Endothelial cell of umbilical vein (primary cell): ENCODE measurements at regions of chr15 and their contacts with region 1.

Region 1: GRCh38 chr15:99704444-99704838 is 28.8 kb downstream of the LYSMD4 start:
- DNase-seq: peak; percentile 92
- H3K4me3 ChIP-seq: no peak overlapping the region
- H3K27ac ChIP-seq: peak overlapping the region; percentile 75
- H3K4me1 ChIP-seq: peaks cover 46% of the 10 kb centered on the region
- H3K27me3 ChIP-seq: no peaks in the 10 kb centered on the region
- CTCF ChIP-seq: peak; percentile 50 to 61
- POLR2A ChIP-seq: no peak

Region 2: DNA sequence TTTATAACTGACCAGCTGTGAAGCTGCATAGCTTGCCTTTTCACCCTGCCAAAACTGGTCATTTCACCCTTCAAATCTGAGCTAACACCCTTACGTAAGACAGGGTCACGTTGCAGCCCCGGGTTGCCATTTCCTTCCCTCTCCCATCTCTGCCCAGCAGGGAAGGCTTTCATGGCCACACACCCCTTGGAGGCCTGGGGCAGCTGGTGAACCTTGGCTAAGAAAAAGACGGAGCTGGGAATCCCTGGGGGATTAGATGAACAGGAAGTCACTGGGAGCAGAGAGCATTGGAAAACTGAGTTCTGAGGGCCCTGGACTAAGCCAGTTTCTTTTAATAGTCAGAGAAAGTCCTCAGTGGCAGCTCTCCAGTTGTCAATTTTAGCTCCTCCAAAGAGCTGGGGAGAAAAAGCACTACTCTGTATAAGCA is 522.9 kb before region 1 on chr15:
- CTCF ChIA-PET with region 1: no interaction called
- POLR2A ChIA-PET with region 1: no interaction called
- dilution Hi-C with region 1: no loop called
- intact Hi-C with region 1: no loop called
- DNase-seq: no peak
- H3K4me3 ChIP-seq: no peak overlapping the region
- H3K27ac ChIP-seq: no peak overlapping the region
- H3K4me1 ChIP-seq: peaks cover 7% of the 10 kb centered on the region
- H3K27me3 ChIP-seq: no peaks in the 10 kb centered on the region
- CTCF ChIP-seq: no peak
- POLR2A ChIP-seq: no peak

Region 3: GRCh38 chr15:99264125-99264524 is 440.3 kb before region 1 on chr15:
- CTCF ChIA-PET with region 1: interaction called, 230 read pairs
- POLR2A ChIA-PET with region 1: no interaction called
- dilution Hi-C with region 1: no loop called
- intact Hi-C with region 1: no loop called
- DNase-seq: no peak
- H3K4me3 ChIP-seq: no peak overlapping the region
- H3K27ac ChIP-seq: no peak overlapping the region
- H3K4me1 ChIP-seq: no peaks in the 10 kb centered on the region
- H3K27me3 ChIP-seq: no peaks in the 10 kb centered on the region
- CTCF ChIP-seq: no peak
- POLR2A ChIP-seq: no peak

Region 4: GRCh38 chr15:99343881-99344551 is 360.4 kb before region 1 on chr15:
- CTCF ChIA-PET with region 1: interaction called, 103 read pairs
- POLR2A ChIA-PET with region 1: no interaction called
- dilution Hi-C with region 1: no loop called
- intact Hi-C with region 1: loop called (anchors 1 kb)
- DNase-seq: peak; percentile 75
- H3K4me3 ChIP-seq: no peak overlapping the region
- H3K27ac ChIP-seq: peak overlapping the region; percentile 13
- H3K4me1 ChIP-seq: peaks cover 14% of the 10 kb centered on the region
- H3K27me3 ChIP-seq: no peaks in the 10 kb centered on the region
- CTCF ChIP-seq: peak; percentile 68 to 70
- POLR2A ChIP-seq: no peak

Region 5: GRCh38 chr15:99414755-99415731 is 289.4 kb before region 1 on chr15:
- CTCF ChIA-PET with region 1: interaction called, 121 read pairs
- POLR2A ChIA-PET with region 1: no interaction called
- dilution Hi-C with region 1: no loop called
- intact Hi-C with region 1: no loop called
- DNase-seq: no peak
- H3K4me3 ChIP-seq: no peak overlapping the region
- H3K27ac ChIP-seq: no peak overlapping the region
- H3K4me1 ChIP-seq: no peaks in the 10 kb centered on the region
- H3K27me3 ChIP-seq: no peaks in the 10 kb centered on the region
- CTCF ChIP-seq: no peak
- POLR2A ChIP-seq: no peak

Region 6: GRCh38 chr15:99495430-99496301 is 208.8 kb before region 1 on chr15:
- CTCF ChIA-PET with region 1: interaction called, 18 read pairs
- POLR2A ChIA-PET with region 1: no interaction called
- dilution Hi-C with region 1: no loop called
- intact Hi-C with region 1: no loop called
- DNase-seq: peak; percentile 37
- H3K4me3 ChIP-seq: no peak overlapping the region
- H3K27ac ChIP-seq: no peak overlapping the region
- H3K4me1 ChIP-seq: peaks cover 5% of the 10 kb centered on the region
- H3K27me3 ChIP-seq: no peaks in the 10 kb centered on the region
- CTCF ChIP-seq: no peak
- POLR2A ChIP-seq: no peak

Region 7: GRCh38 chr15:99682455-99682854 is 22.0 kb before region 1 on chr15:
- CTCF ChIA-PET with region 1: interaction called, 56 read pairs
- POLR2A ChIA-PET with region 1: no interaction called
- dilution Hi-C with region 1: no loop called
- intact Hi-C with region 1: loop called (anchors 1 kb)
- DNase-seq: peak; percentile 94
- H3K4me3 ChIP-seq: peak overlapping the region in 1 of 3 experiments; percentile 41
- H3K27ac ChIP-seq: peak overlapping the region; percentile 95
- H3K4me1 ChIP-seq: peaks cover 23% of the 10 kb centered on the region
- H3K27me3 ChIP-seq: no peaks in the 10 kb centered on the region
- CTCF ChIP-seq: no peak
- POLR2A ChIP-seq: no peak

Region 8: DNA sequence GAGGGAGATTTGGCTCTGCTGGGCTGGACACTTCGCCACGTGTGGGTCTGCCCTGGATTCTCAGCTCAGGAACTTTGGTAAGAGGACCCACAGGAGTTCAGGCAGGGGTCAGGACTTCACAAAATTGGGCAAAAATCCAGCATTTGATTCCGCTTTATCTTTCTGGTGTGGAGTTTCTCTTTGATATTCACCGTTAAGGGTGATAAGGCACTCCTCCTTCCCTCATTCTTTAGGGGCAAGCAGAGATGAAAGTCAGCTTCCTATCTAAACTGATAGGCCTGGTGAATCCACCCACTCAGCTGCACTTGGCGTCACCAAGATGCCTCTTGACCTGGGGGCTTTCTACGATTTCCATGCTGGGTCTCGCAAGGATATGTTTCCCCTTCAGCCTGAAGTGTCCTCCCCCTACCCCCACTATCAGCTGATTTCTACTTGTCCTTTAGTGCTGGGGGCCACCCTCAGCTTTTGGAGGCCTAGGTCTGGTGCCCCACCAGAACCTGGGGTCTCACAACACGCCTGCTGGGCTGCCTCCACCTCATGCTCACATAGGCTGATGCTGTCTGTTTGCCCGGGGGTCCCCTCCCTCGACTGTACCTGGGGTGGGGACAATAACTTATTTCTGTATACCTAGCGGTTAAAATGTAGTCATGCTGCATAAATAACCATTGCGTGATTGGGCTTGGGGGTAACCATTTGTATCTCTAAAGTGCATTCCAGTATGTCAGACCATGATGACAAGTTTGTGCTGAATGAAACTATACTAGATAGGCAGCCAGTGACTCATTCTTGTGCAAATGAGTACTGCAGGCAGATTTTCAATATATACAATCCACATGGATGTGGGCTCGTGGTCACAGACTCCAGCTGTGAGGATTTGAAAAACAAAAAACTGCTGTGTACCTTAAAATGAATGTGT is 389.0 kb after region 1 on chr15:
- CTCF ChIA-PET with region 1: no interaction called
- POLR2A ChIA-PET with region 1: no interaction called
- dilution Hi-C with region 1: no loop called
- intact Hi-C with region 1: no loop called
- DNase-seq: no peak
- H3K4me3 ChIP-seq: no peak overlapping the region
- H3K27ac ChIP-seq: no peak overlapping the region
- H3K4me1 ChIP-seq: no peaks in the 10 kb centered on the region
- H3K27me3 ChIP-seq: no peaks in the 10 kb centered on the region
- CTCF ChIP-seq: no peak
- POLR2A ChIP-seq: no peak